Lower leg skin (tissue), 4 donors: ENCODE measurements at regions of chr4 and their contacts with region 1.

Region 1: GRCh38 chr4:180314972-180315371 is 1928.2 kb upstream of the TENM3 start:
- DNase-seq: no peak
- H3K4me3 ChIP-seq: no peak overlapping the region
- CTCF ChIP-seq: no peak
- POLR2A ChIP-seq: no peak

Region 2: DNA sequence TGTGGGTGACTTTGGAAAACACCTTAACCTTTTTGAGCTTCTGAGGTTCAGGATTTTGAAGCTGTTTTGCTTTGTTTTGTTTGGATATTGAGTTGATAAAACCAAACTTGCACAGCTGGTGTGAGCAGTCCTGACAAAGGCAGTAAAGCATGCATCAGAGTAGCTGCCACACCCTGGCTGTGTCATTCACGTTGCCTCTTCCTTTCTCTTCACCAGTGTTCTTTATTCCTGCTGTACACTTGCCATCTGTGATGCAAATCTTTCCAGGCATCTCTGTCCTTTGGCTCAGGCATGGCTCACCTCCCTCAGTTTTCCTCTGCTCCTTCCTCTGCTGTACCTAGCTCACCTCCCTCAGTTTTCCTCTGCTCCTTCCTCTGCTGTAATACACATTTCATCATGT is 1022.5 kb before region 1 on chr4:
- intact Hi-C with region 1: loop called (anchors 5 kb)
- DNase-seq: no peak
- H3K4me3 ChIP-seq: no peak overlapping the region
- CTCF ChIP-seq: no peak
- POLR2A ChIP-seq: no peak